Psoas muscle (tissue), 8 donors: ENCODE measurements at regions of chr5 and their contacts with region 1.

Region 1: GRCh38 chr5:138138949-138139780 is at the start of gene NME5:
- DNase-seq: peak; percentile 53 to 76
- ATAC-seq: peak; percentile 70 to 95 (median 86)
- H3K4me3 ChIP-seq: peak within 1 kb of the TSS; percentile 69
- H3K27ac ChIP-seq: no peak within 1 kb of the TSS
- H3K4me1 ChIP-seq: peaks cover 6% of the 10 kb centered on the region
- H3K27me3 ChIP-seq: no peaks in the 10 kb centered on the region
- CTCF ChIP-seq: no peak
- total RNA-seq, gene NME5: 0.65 to 1.2 (median 0.96) TPM

Region 2: DNA sequence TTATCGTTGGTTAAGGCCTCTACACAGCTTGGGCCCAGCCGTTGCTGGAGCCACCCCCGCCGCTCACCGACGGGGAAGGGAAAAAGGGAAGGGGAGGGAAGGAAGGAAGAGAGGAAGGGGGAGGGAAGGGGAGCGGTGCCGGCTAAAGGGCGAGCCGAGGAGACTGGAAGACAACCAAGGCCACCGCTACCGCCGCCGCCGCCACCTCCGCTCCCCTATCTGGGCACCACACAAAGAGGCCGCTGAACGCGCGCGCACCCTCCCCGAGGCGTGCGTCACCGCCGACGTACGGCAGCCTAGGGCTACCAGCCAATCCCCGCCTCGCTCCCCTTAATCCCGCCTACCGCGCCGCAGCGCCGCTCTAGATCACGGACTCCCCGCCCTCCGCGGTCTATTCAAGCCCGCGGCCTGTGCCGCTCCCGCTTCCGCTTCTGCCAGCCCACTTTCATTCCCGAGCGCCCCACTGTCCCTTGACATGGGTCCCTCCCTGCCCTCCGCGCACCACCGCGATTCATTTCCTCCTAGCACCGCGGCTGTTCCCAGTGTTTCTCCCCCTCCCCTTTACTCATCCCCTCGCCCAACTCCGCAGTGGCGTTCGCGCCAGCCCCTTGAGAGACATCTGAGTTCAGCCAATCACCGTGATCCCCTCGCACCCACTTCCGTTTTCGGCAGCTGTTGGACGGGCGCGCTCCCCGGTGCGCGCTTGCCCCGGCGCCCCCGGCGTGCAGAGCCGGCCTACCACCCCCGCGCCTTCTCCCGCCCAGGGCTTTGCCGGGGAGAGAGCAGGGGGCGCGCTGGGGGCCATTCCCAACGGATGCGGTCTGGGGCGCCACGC is 384.8 kb before region 1 on chr5 and contains the start of gene HNRNPA0:
- intact Hi-C with region 1: loop called in 1 of 2 experiments (anchors 10 kb)
- DNase-seq: peak; percentile 96 to 98
- ATAC-seq: peak; percentile 94 to 95 (median 94)
- H3K4me3 ChIP-seq: peak within 1 kb of the TSS; percentile 95
- H3K27ac ChIP-seq: peak within 1 kb of the TSS; percentile 100
- H3K4me1 ChIP-seq: peaks cover 17% of the 10 kb centered on the region
- H3K27me3 ChIP-seq: no peaks in the 10 kb centered on the region
- CTCF ChIP-seq: peak; percentile 10
- total RNA-seq, gene HNRNPA0: 11.5 to 19.2 (median 17.6) TPM

Region 3: DNA sequence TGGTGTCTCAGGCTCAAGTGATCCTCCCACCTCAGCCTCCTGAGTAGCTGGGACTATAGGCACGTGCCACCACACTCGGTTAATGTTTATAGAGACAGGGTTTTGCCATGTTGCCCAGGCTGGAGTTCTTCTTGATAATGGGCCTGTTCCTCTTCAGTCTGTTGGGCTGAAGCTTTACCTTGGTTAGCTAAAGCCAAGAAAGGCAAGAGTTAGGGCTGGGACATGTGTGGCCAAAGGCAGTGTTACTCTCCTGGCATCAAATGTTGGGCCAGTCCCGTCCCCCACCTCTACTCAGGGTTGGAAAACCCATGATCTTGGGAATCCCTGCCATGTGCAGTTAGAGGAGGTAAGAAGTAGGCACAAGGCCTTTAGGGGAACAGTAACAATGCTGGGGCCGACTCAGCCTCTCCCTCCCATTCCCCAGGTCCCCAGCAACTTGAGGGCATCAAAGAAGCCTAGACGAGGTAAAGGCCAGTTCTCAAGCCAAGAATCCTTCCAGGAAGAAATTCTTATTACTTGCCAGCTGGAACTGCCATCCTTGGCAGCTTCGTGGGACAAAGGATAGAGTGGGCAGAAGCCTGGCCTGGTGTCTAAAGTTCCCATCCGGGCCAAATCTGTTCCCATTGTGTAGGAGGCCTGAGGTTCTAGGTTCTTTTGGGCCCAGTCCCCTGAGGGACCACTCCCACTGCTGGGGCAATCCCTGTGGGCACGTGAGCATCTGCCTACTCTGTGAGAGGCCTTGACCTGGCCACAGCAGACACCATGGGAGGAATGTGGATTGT is 330.6 kb after region 1 on chr5:
- intact Hi-C with region 1: no loop called
- DNase-seq: peak in 1 of 2 donors; percentile 39
- ATAC-seq: peak in 3 of 4 donors; percentile 5 to 15 (median 12)
- H3K4me3 ChIP-seq: no peak overlapping the region
- H3K27ac ChIP-seq: no peak overlapping the region
- H3K4me1 ChIP-seq: peaks cover 5% of the 10 kb centered on the region
- H3K27me3 ChIP-seq: no peaks in the 10 kb centered on the region
- CTCF ChIP-seq: no peak

Region 4: GRCh38 chr5:138601444-138601843 is 462.3 kb after region 1 on chr5:
- intact Hi-C with region 1: no loop called
- DNase-seq: no peak
- ATAC-seq: no peak
- H3K4me3 ChIP-seq: no peak overlapping the region
- H3K27ac ChIP-seq: no peak overlapping the region
- H3K4me1 ChIP-seq: no peaks in the 10 kb centered on the region
- H3K27me3 ChIP-seq: no peaks in the 10 kb centered on the region
- CTCF ChIP-seq: no peak